ENCODE measurements at regions of chr19 and their contacts with region 1.

Region 1: DNA sequence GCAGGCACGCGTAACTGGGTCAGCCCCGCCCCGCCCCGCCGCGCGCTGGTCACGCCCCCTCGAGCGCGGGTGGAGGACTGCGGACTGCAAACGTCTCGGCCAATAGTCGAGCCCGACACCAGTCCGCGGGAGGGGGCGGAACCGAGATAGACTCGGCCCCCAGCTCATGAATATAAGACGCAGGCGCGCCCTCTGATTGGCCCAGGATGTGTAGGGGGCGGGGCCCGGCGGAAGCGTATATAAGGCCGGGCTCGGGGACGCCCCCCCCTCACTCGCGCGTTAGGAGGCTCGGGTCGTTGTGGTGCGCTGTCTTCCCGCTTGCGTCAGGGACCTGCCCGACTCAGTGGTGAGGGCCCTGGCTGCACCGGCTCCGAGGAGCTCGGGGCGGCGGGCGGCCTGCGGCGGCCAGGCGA is at the start of gene CIRBP:
- DNase-seq: peak; percentile 94 to 100 (median 98)
- ATAC-seq: peak; percentile 79 to 83 (median 82)
- H3K4me3 ChIP-seq: peak within 1 kb of the TSS; percentile 95 to 99
- H3K4me3 Mint-ChIP-seq: peak within 1 kb of the TSS; percentile 82 to 94 (median 89)
- H3K27ac ChIP-seq: peak within 1 kb of the TSS; percentile 91
- H3K27ac Mint-ChIP-seq: peak within 1 kb of the TSS; percentile 86 to 89
- H3K4me1 ChIP-seq: peaks cover 44 to 77% of the 10 kb centered on the region in 2 experiments
- H3K4me1 Mint-ChIP-seq: peaks cover 61 to 79% (median 64%) of the 10 kb centered on the region in 3 donors
- H3K27me3 ChIP-seq: no peaks in the 10 kb centered on the region
- H3K27me3 Mint-ChIP-seq: no peaks in the 10 kb centered on the region
- total RNA-seq, gene CIRBP: 477 to 682 (median 657) TPM

Region 2: DNA sequence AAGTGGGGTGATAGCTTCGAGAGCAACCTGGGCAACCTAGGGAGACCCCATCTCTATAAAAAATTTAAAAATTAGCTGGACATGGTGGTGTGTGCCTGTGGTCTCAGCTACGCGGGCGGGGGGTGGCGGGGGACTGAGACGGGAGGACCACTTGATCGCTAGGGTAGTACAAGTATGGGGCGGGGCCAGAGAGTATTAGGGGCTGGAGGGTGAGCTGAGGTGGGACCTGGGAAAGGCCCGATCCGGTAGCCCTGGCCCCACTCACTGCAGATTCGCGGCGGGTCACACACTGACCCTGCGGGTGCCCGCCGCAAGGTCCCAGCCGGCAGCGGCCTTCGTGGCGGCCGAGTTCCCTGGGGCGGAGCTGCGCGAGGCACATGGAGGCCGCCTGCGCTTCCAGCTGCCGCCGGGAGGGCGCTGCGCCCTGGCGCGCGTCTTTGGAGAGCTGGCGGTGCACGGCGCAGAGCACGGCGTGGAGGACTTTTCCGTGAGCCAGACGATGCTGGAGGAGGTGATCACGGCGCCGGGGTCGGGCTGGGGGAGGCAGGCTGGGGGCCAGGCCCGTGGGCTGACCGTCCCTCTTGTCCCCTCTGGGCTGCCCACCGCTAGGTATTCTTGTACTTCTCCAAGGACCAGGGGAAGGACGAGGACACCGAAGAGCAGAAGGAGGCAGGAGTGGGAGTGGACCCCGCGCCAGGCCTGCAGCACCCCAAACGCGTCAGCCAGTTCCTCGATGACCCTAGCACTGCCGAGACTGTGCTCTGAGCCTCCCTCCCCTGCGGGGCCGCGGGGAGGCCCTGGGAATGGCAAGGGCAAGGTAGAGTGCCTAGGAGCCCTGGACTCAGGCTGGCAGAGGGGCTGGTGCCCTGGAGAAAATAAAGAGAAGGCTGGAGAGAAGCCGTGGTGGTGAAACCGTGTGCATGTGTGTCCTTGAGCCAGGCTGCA is 204.1 kb before region 1 on chr19:
- CTCF ChIA-PET with region 1: no interaction called
- POLR2A ChIA-PET with region 1: interaction called in 1 of 2 experiments, 17 read pairs
- DNase-seq: peak in 32 of 35 experiments; percentile 50 to 87 (median 66)
- ATAC-seq: peak; percentile 26 to 36 (median 30)
- H3K4me3 ChIP-seq: peak overlapping the region in 1 of 2 donors; percentile 18
- H3K4me3 Mint-ChIP-seq: peak overlapping the region; percentile 67 to 90 (median 70)
- H3K27ac ChIP-seq: no peak overlapping the region
- H3K27ac Mint-ChIP-seq: peak overlapping the region; percentile 61 to 86
- H3K4me1 ChIP-seq: peaks cover 17 to 59% of the 10 kb centered on the region in 2 experiments
- H3K4me1 Mint-ChIP-seq: peaks cover 32 to 37% (median 37%) of the 10 kb centered on the region in 3 donors
- H3K27me3 ChIP-seq: no peaks in the 10 kb centered on the region
- H3K27me3 Mint-ChIP-seq: no peaks in the 10 kb centered on the region

Region 3: DNA sequence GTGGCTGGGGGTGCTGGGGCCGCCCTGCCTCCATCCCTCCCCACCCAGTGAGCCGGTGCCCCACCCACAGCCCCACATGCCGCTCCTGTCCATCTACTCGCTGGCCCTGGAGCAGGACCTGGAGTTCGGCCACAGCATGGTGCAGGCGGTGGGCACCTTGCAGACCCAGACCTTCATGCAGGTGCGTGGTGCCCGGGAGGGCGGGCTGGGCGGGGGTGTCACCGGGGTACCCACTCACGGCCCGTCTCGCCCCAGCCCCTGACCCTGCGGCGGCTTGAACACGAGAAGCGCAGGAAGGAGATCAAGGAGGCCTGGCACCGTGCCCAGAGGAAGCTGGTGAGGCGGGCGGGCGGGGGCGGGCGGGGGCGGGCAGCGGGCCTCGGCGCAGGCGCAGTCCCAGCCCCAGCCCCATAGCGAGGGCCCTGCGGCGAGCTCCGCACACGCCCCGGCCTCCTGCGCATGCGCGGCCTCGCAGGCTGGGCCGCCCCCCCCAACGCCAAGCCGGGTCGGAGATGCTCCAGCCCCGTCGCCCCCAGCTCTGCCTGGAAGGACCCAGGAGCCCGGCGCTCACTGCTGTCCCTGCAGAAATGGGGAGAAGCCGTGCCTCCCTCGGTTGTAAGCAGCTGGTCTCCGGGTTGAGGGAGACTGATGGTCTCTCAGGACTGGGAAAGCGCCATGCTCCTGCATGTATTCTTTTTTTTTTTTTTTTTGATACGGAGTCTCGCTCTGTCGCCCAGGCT is 194.4 kb before region 1 on chr19:
- CTCF ChIA-PET with region 1: no interaction called
- POLR2A ChIA-PET with region 1: interaction called, 7 to 13 read pairs
- DNase-seq: peak; percentile 88 to 99 (median 95)
- ATAC-seq: peak; percentile 48 to 60 (median 55)
- H3K4me3 ChIP-seq: peak overlapping the region; percentile 37 to 49
- H3K4me3 Mint-ChIP-seq: peak overlapping the region; percentile 73 to 88 (median 77)
- H3K27ac ChIP-seq: peak overlapping the region; percentile 93
- H3K27ac Mint-ChIP-seq: peak overlapping the region; percentile 96 to 99
- H3K4me1 ChIP-seq: peaks cover 56 to 94% of the 10 kb centered on the region in 2 experiments
- H3K4me1 Mint-ChIP-seq: peaks cover 46 to 60% (median 53%) of the 10 kb centered on the region in 3 donors
- H3K27me3 ChIP-seq: no peaks in the 10 kb centered on the region
- H3K27me3 Mint-ChIP-seq: no peaks in the 10 kb centered on the region

Region 4: DNA sequence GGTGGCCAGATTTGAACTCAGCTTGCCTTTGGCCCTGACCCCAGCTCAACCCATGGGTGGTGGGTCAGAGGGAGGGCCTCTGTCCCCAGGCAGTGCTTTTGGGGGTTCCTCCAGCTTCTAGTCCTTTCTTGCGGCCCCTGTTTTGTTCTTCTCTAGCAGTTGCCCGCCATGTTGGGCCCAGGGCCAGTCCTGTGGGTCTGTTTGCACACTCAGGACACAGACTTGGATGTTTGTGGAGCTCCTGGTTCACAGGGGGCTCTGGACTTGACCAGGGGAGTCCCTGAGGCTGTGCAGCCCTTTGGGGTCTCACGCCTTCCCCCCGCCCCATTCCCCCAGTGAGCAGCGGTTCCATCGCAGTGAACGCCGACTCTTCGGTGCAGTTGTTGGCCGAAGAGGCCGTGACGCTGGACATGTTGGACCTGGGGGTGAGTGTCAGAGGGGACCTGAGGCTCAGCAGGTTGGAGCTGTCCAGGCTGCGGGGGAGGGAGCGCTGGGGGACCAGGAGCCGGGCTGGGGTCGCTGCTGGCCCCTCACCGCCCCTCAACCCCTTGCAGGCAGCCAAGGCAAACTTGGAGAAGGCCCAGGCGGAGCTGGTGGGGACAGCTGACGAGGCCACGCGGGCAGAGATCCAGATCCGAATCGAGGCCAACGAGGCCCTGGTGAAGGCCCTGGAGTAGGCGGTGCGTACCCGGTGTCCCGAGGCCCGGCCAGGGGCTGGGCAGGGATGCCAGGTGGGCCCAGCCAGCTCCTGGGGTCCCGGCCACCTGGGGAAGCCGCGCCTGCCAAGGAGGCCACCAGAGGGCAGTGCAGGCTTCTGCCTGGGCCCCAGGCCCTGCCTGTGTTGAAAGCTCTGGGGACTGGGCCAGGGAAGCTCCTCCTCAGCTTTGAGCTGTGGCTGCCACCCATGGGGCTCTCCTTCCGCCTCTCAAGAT is 25.0 kb before region 1 on chr19:
- CTCF ChIA-PET with region 1: interaction called, 28 to 115 read pairs
- POLR2A ChIA-PET with region 1: interaction called, 20 to 58 read pairs
- DNase-seq: peak; percentile 72 to 92 (median 84)
- ATAC-seq: peak; percentile 38 to 41 (median 39)
- H3K4me3 ChIP-seq: no peak overlapping the region
- H3K4me3 Mint-ChIP-seq: peak overlapping the region; percentile 43 to 93 (median 59)
- H3K27ac ChIP-seq: peak overlapping the region; percentile 58
- H3K27ac Mint-ChIP-seq: peak overlapping the region; percentile 80 to 92
- H3K4me1 ChIP-seq: peaks cover 18 to 77% of the 10 kb centered on the region in 2 experiments
- H3K4me1 Mint-ChIP-seq: peaks cover 16 to 38% (median 38%) of the 10 kb centered on the region in 3 donors
- H3K27me3 ChIP-seq: peaks cover 0 to 11% of the 10 kb centered on the region in 2 experiments
- H3K27me3 Mint-ChIP-seq: no peaks in the 10 kb centered on the region

Region 5: DNA sequence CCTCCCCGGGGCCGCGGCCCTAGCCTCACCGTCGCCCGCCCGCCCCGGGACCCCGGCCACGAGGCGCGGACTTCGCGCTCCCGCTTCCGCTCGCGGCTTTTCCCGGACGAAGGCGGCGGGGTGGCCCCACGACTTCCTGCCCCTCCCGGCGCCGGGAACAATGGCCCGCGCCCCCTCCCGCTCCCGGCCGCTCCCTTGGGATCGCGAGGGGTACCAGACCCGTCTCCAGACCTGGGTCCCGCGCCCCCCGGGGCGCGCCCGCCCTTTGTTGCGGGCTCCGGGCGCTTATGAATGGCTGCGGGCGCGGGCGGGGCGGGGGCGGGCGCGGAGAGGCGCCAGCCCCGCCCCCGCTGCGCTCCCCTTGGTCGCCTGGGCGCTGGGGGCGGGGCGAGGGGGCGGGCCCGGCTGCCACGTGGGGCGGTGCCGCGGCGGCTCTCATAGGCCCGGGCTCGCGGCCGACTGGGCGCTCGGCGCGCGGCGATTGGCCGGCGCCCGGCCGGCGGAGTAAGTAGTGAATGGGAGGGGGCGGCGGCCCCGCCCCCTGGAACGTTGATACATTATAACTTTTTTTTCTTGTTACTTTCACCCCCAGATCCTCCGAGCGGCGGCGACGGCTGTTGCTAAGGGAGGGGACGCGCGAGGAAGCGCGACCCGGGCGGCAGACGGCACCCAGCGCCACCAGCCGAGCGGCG is 19.6 kb before region 1 on chr19:
- CTCF ChIA-PET with region 1: interaction called, 28 to 115 read pairs
- POLR2A ChIA-PET with region 1: interaction called, 20 to 58 read pairs
- DNase-seq: peak; percentile 87 to 98 (median 95)
- ATAC-seq: peak; percentile 60 to 68 (median 64)
- H3K4me3 ChIP-seq: peak overlapping the region; percentile 61 to 76
- H3K4me3 Mint-ChIP-seq: peak overlapping the region; percentile 73 to 91 (median 82)
- H3K27ac ChIP-seq: peak overlapping the region; percentile 66
- H3K27ac Mint-ChIP-seq: peak overlapping the region; percentile 73 to 86
- H3K4me1 ChIP-seq: peaks cover 20 to 59% of the 10 kb centered on the region in 2 experiments
- H3K4me1 Mint-ChIP-seq: peaks cover 11 to 15% (median 13%) of the 10 kb centered on the region in 3 donors
- H3K27me3 ChIP-seq: no peaks in the 10 kb centered on the region
- H3K27me3 Mint-ChIP-seq: no peaks in the 10 kb centered on the region

Region 6: GRCh38 chr19:1825909-1826556 is 557.0 kb after region 1 on chr19:
- CTCF ChIA-PET with region 1: interaction called in 1 of 2 experiments, 11 read pairs
- POLR2A ChIA-PET with region 1: no interaction called
- DNase-seq: peak; percentile 41 to 86 (median 73)
- ATAC-seq: peak; percentile 73 to 81 (median 78)
- H3K4me3 ChIP-seq: no peak overlapping the region
- H3K4me3 Mint-ChIP-seq: no peak overlapping the region
- H3K27ac ChIP-seq: no peak overlapping the region
- H3K27ac Mint-ChIP-seq: no peak overlapping the region
- H3K4me1 ChIP-seq: peaks cover 0 to 13% of the 10 kb centered on the region in 2 experiments
- H3K4me1 Mint-ChIP-seq: peaks cover 5 to 9% (median 7%) of the 10 kb centered on the region in 3 donors
- H3K27me3 ChIP-seq: no peaks in the 10 kb centered on the region
- H3K27me3 Mint-ChIP-seq: no peaks in the 10 kb centered on the region